IMR-90 (cell line): ENCODE measurements at regions of chr20 and their contacts with region 1.

Region 1: GRCh38 chr20:36777167-36777566 is 3.6 kb upstream of the DSN1 start:
- DNase-seq: no peak
- ATAC-seq: no peak
- H3K4me3 ChIP-seq: no peak overlapping the region
- H3K27ac ChIP-seq: no peak overlapping the region
- H3K4me1 ChIP-seq: 0 out of 2 replicates have a peak, but pooled peaks cover 2% of the 10 kb centered on the region
- H3K27me3 ChIP-seq: no peaks in the 10 kb centered on the region
- CTCF ChIP-seq: no peak
- POLR2A ChIP-seq: no peak
- RAD21 ChIP-seq: no peak

Region 2: GRCh38 chr20:36745927-36746659 is 31.1 kb before region 1 on chr20 and contains the start of gene NDRG3:
- CTCF ChIA-PET with region 1: interaction called, 4 read pairs
- POLR2A ChIA-PET with region 1: interaction called, 14 read pairs
- dilution Hi-C with region 1: no loop called
- in situ Hi-C with region 1: no loop called
- intact Hi-C with region 1: no loop called
- DNase-seq: peak; percentile 89
- ATAC-seq: peak; percentile 100
- H3K4me3 ChIP-seq: peak within 1 kb of the TSS; percentile 66
- H3K27ac ChIP-seq: peak within 1 kb of the TSS; percentile 41
- H3K4me1 ChIP-seq: peaks cover 2% of the 10 kb centered on the region; the same call in 1 of the 2 replicates
- H3K27me3 ChIP-seq: no peaks in the 10 kb centered on the region
- CTCF ChIP-seq: no peak
- POLR2A ChIP-seq: no peak
- RAD21 ChIP-seq: no peak
- total RNA-seq, gene NDRG3: 31.9 and 34.2 TPM in 2 replicates

Region 3: DNA sequence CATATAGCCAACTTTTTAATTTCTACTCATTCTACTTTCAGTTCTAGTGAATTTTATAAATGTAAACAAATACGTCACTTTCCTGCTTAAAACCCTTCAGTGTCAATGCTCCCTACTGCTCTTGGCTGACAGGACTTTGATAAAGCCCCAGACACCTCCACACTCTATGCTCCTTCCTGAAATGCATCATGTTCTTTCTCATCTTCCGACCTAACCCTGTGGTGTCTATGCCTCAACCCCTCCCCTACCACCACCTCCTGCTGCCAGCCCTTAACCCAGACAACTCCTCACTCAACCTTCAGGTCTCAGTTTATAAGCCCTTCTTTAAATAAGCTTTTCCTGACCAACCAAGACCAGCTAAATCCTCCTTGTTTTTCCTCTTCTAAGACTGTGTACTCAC is 117.9 kb after region 1 on chr20:
- CTCF ChIA-PET with region 1: no interaction called
- POLR2A ChIA-PET with region 1: no interaction called
- dilution Hi-C with region 1: no loop called
- in situ Hi-C with region 1: no loop called
- intact Hi-C with region 1: no loop called
- DNase-seq: no peak
- ATAC-seq: no peak; the same call in 1 of the 2 replicates
- H3K4me3 ChIP-seq: no peak overlapping the region
- H3K27ac ChIP-seq: no peak overlapping the region
- H3K4me1 ChIP-seq: 0 out of 2 replicates have a peak, but pooled peaks cover 3% of the 10 kb centered on the region
- H3K27me3 ChIP-seq: no peaks in the 10 kb centered on the region
- CTCF ChIP-seq: no peak
- POLR2A ChIP-seq: no peak
- RAD21 ChIP-seq: no peak

Region 4: GRCh38 chr20:37270576-37271420 is 493.6 kb after region 1 on chr20:
- CTCF ChIA-PET with region 1: no interaction called
- POLR2A ChIA-PET with region 1: no interaction called
- dilution Hi-C with region 1: no loop called
- in situ Hi-C with region 1: no loop called
- intact Hi-C with region 1: no loop called
- DNase-seq: peak; percentile 50
- ATAC-seq: no peak
- H3K4me3 ChIP-seq: no peak overlapping the region
- H3K27ac ChIP-seq: no peak overlapping the region
- H3K4me1 ChIP-seq: no peaks in the 10 kb centered on the region; the same call in 1 of the 2 replicates
- H3K27me3 ChIP-seq: peaks cover 7% of the 10 kb centered on the region
- CTCF ChIP-seq: no peak
- POLR2A ChIP-seq: no peak
- RAD21 ChIP-seq: no peak